Motor neuron (in vitro differentiated cells): ENCODE measurements at regions of chr4 and their contacts with region 1.

Region 1: DNA sequence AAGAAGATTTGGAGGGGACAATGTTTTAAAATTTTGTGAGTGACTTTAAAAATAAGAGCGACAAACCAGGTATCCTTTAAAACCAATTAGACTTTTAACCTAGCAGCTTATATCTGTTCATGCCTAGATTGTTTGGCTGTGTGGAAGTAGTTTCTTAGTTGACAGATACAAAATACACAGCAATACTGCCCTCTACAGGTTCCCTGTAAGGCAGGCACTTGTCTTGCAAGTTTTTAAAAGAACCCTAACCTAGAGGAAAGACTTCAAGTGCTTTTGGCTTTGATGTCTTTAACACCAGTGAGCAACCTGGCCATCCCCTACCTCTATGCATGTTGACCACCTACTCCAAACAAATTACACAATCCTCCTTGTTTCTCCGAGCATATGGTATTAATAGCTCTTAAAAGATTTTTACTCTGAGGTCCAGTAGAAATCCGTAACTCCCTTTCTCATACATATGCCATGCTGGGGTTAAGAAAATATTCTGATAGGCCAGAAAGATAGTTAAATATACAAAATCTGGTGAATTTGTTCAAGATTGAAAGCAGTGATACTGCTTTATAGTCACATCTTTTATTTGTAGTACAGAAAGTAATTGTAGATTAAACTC is 273.0 kb downstream of the ARHGAP24 start:
- ATAC-seq: peak; percentile 13 to 80 (median 66)
- H3K4me3 ChIP-seq: no peak overlapping the region
- H3K27ac ChIP-seq: no peak overlapping the region
- H3K4me1 ChIP-seq: no peaks in the 10 kb centered on the region

Region 2: GRCh38 chr4:85147439-85148076 is 600.4 kb before region 1 on chr4:
- in situ Hi-C with region 1: loop called in 6 of 9 experiments (anchors 10 to 25 kb)
- ATAC-seq: peak; percentile 44 to 81 (median 77)
- H3K4me3 ChIP-seq: peak overlapping the region in 1 of 5 donors; percentile 16
- H3K27ac ChIP-seq: no peak overlapping the region
- H3K4me1 ChIP-seq: peaks cover 0 to 4% of the 10 kb centered on the region in 2 donors

Region 3: GRCh38 chr4:85474818-85475630 is 273.0 kb before region 1 on chr4 and contains the start of gene ARHGAP24:
- in situ Hi-C with region 1: loop called in 1 of 9 experiments (anchors 25 kb)
- ATAC-seq: peak; percentile 90 to 98 (median 93)
- H3K4me3 ChIP-seq: peak within 1 kb of the TSS; percentile 37 to 59 (median 53)
- H3K27ac ChIP-seq: peak within 1 kb of the TSS in 1 of 2 donors; percentile 37
- H3K4me1 ChIP-seq: peaks cover 6% of the 10 kb centered on the region in 2 donors
- total RNA-seq, gene ARHGAP24: 0.67 to 17.6 (median 2.5) TPM